ENCODE measurements at regions of chr1 and their contacts with region 1.

Region 1: DNA sequence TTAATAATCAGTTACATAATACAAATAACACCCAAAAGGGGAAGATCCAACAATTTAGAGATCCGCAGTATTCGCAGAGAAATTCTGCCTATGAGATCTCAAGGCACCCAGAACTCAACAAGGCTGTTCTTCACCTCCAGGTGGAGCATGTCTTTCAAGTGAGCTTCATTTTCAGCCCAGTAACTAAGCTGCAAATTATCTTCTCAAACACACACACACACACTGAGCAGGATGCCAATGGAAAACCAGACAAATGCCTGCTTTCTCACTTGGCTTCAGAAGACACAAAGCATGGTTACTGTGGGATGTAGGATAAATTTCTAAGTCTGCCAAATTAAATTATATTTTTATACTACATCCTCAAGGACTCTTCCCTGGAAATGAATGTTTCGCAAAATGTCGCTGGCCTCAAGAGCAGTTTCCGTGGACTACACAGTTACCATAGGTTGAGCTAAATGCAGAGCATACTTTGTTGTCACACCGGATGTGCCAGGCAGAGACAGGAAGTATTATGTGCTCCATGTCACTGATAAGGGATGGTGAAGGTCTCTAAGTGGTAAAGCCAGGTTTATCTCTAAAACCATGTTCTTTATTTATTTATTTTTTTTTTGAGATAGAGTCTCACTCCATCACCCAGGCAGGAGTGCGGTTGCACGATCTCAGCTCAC is 30.3 kb downstream of the UBR4 start:
- DNase-seq: peak; percentile 23 to 55 (median 36)
- H3K4me3 ChIP-seq: no peak overlapping the region
- H3K4me3 Mint-ChIP-seq: peak overlapping the region in 3 of 8 donors; percentile 34 to 49 (median 39)
- H3K27ac ChIP-seq: no peak overlapping the region
- H3K27ac Mint-ChIP-seq: peak overlapping the region; percentile 4 to 88 (median 77)
- H3K4me1 ChIP-seq: peaks cover 15% of the 10 kb centered on the region
- H3K4me1 Mint-ChIP-seq: peaks cover 14 to 33% (median 25%) of the 10 kb centered on the region in 4 donors
- H3K27me3 ChIP-seq: no peaks in the 10 kb centered on the region
- H3K27me3 Mint-ChIP-seq: no peaks in the 10 kb centered on the region

Region 2: DNA sequence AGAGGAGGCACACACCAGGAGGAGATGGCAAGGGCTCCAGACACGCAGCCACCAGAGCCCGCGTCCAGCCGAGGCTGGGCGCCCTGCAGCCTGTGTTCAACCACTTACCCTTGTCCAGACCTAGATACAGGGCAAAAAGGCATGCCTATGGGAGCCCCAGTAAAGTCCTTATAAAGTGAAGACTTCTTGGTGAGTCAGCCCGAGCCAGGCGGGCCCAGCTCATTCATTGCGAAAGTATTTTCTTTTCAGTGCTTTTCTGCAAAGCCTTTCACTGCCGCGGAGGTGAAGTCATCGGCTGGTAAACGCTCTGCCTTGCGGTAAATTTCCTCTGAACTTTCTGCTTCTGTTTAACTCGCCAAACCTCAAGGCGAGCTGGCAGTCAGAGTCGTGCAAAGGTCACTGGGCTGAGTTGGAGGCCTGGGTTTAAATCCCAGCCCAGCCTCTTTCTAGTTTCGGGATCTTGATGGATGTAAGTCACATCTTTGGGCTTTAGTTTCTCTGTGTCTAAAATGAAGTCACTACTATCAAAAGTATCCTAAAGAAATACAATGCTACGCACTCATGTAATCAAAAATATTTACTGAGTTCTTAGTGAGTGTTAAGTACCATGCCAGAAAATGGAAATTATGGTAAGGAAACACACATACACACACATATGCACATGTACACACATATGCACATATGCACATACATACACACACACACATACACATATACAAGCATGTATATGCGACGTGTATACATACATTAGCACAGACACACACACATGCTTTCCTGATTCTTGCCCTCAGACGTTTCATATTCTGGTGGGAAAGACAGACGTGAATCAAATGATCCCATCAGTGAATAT is 168.5 kb before region 1 on chr1:
- CTCF ChIA-PET with region 1: no interaction called
- POLR2A ChIA-PET with region 1: no interaction called
- intact Hi-C with region 1: no loop called
- DNase-seq: peak; percentile 44 to 63 (median 48)
- H3K4me3 ChIP-seq: peak overlapping the region in 1 of 2 donors; percentile 14
- H3K4me3 Mint-ChIP-seq: peak overlapping the region; percentile 46 to 78 (median 62)
- H3K27ac ChIP-seq: no peak overlapping the region
- H3K27ac Mint-ChIP-seq: peak overlapping the region; percentile 37 to 93 (median 58)
- H3K4me1 ChIP-seq: peaks cover 18% of the 10 kb centered on the region
- H3K4me1 Mint-ChIP-seq: peaks cover 15 to 27% (median 18%) of the 10 kb centered on the region in 4 donors
- H3K27me3 ChIP-seq: no peaks in the 10 kb centered on the region
- H3K27me3 Mint-ChIP-seq: no peaks in the 10 kb centered on the region

Region 3: GRCh38 chr1:19165501-19165900 is 14.2 kb before region 1 on chr1:
- CTCF ChIA-PET with region 1: interaction called, 12 read pairs
- POLR2A ChIA-PET with region 1: no interaction called
- intact Hi-C with region 1: no loop called
- DNase-seq: no peak
- H3K4me3 ChIP-seq: no peak overlapping the region
- H3K4me3 Mint-ChIP-seq: no peak overlapping the region
- H3K27ac ChIP-seq: no peak overlapping the region
- H3K27ac Mint-ChIP-seq: no peak overlapping the region
- H3K4me1 ChIP-seq: no peaks in the 10 kb centered on the region
- H3K4me1 Mint-ChIP-seq: no peaks in the 10 kb centered on the region
- H3K27me3 ChIP-seq: no peaks in the 10 kb centered on the region
- H3K27me3 Mint-ChIP-seq: no peaks in the 10 kb centered on the region

Region 4: DNA sequence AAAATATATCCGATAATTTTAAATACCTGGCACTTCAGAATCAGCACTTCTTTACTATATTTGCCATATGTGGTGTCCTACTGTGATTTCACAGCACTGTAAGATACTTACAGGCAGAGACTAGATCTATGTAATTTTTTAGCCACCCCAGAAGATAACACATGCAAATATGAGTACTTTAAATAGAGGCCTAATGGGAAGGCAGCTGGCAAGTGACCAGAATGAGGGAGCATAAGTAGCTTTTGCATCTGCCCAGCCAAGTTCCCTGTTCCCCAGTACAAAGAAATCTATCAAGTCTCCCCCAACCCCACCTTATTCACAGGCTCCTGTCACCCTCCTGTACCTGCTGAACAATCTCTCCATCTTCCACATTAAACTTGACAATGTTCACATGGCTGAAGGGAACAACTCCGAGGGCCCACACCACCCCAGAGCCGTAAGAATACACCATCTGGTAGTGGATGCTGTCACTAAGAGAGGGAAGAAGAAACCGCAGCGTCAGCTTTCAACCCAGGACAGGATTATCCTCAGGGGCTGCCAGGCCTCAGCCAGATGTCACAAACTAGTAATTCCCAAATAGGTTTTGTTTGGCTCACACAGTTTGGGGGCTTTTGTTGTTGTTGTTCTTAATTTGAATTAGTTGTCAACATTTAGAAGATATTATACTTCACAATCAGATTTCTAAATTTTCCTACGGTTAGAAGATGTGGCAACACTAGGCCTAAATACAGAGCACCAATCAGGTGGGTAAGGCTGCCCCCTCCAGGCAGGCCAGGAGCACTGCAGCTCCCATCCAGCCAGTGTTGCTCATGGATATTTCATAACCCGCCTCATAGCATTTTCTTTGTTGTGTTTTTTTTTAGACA is 61.2 kb after region 1 on chr1:
- CTCF ChIA-PET with region 1: interaction called, 21 read pairs
- POLR2A ChIA-PET with region 1: no interaction called
- intact Hi-C with region 1: loop called (anchors 1 kb)
- DNase-seq: peak; percentile 62 to 67 (median 65)
- H3K4me3 ChIP-seq: no peak overlapping the region
- H3K4me3 Mint-ChIP-seq: no peak overlapping the region
- H3K27ac ChIP-seq: no peak overlapping the region
- H3K27ac Mint-ChIP-seq: peak overlapping the region in 6 of 7 donors; percentile 36 to 91 (median 67)
- H3K4me1 ChIP-seq: no peaks in the 10 kb centered on the region
- H3K4me1 Mint-ChIP-seq: peaks cover 0 to 2% (median under 1%) of the 10 kb centered on the region in 4 donors
- H3K27me3 ChIP-seq: no peaks in the 10 kb centered on the region
- H3K27me3 Mint-ChIP-seq: no peaks in the 10 kb centered on the region

Measured in CD4-positive, alpha-beta memory T cell (primary cell).